OCI-LY7 (cell line): ENCODE measurements at regions of chr4 and their contacts with region 1.

Region 1: DNA sequence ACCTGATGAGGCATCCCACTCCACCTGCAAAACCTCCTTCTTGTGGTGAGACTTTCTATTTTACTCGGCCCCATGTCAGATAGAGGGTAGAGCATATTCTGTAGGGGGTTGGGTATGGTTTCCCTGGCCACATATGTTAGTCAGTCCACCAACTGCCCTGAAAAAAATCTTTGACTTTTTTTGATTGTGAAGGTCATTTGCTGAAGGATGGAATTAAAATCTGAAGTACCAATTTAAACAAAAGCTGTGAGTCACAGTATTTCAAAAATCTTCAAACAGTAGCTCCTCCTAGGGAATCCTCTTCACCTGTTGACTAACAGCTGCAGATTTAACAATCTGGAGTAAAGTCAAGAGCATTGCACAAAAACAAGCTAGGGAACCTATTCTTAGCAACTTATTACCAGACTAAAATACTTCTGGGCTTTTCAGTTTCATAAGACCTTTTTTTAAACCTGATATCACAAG is 8.0 kb upstream of the CCDC110 start:
- DNase-seq: peak; percentile 79
- H3K4me3 ChIP-seq: peak overlapping the region; percentile 69
- H3K27ac ChIP-seq: peak overlapping the region; percentile 95
- H3K4me1 ChIP-seq: peaks cover 58% of the 10 kb centered on the region
- CTCF ChIP-seq: no peak

Region 2: GRCh38 chr4:185286571-185286970 is 193.0 kb before region 1 on chr4:
- CTCF ChIA-PET with region 1: no interaction called
- POLR2A ChIA-PET with region 1: no interaction called
- intact Hi-C with region 1: no loop called
- DNase-seq: no peak
- H3K4me3 ChIP-seq: no peak overlapping the region
- H3K27ac ChIP-seq: no peak overlapping the region
- H3K4me1 ChIP-seq: no peaks in the 10 kb centered on the region
- CTCF ChIP-seq: no peak

Region 3: GRCh38 chr4:185332575-185333464 is 146.7 kb before region 1 on chr4:
- CTCF ChIA-PET with region 1: no interaction called
- POLR2A ChIA-PET with region 1: no interaction called
- intact Hi-C with region 1: no loop called
- DNase-seq: peak; percentile 7
- H3K4me3 ChIP-seq: no peak overlapping the region
- H3K27ac ChIP-seq: no peak overlapping the region
- H3K4me1 ChIP-seq: peaks cover 10% of the 10 kb centered on the region
- CTCF ChIP-seq: no peak

Region 4: DNA sequence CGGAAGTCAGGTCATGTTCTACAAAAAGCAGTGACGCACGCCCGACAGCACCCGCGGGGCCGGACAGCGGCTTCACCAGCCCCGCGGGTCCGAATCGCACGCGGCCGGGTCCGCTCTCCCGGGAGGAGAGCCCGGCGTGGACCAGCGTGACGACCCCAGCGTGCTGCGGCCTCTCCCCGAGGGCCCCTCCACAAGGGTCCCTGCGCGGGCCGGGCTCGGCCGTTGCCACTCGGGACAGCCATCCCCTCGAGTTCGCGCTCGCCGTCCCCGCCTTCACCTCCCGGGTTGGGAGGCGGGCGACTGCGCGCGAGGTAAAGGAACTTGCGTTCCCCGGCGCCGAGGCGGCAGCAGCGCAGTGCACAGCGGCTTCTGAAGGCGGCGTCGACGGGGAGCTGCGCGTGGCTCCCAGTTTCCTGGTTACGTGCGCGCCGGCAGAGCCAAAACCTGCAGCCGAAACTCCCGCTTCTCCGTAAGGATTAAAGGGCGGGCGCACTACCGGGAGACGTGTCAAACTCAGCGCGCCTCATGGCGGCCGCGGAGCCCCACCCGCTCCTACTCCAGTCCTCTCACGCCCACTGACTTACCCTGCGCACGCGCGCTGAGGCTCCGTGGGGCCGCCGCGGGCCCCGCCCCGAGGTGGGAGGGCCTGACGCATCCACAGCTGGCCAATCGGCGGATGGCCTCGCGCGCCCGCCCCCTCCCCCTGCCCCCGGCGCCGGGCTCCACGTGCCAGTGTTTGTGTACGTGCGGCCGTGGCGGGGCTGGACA is 83.4 kb before region 1 on chr4:
- CTCF ChIA-PET with region 1: no interaction called
- POLR2A ChIA-PET with region 1: interaction called, 12 read pairs
- intact Hi-C with region 1: no loop called
- DNase-seq: peak; percentile 97
- H3K4me3 ChIP-seq: peak overlapping the region; percentile 75
- H3K27ac ChIP-seq: peak overlapping the region; percentile 70
- H3K4me1 ChIP-seq: peaks cover 58% of the 10 kb centered on the region
- CTCF ChIP-seq: no peak

Region 5: DNA sequence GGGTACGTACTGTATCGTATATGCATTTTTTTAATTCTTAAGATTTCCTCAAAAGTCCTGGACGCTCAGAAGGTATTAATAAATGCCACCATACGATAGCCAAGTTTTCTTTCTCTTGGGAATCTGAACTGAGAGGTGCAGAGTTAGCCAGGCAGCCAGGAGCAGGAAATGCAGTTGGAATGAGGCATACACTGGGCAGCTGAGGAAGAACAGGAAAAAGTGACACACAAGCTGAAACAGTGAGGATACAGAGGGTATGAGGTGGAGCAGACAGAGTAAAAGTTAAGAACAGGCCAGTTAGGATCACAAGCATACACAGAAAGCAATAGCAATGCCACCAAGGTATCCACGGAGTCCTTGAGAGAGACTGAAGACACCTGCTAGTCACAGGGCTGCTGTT is 67.1 kb before region 1 on chr4:
- CTCF ChIA-PET with region 1: no interaction called
- POLR2A ChIA-PET with region 1: interaction called, 26 read pairs
- intact Hi-C with region 1: loop called (anchors 1 kb)
- DNase-seq: no peak
- H3K4me3 ChIP-seq: no peak overlapping the region
- H3K27ac ChIP-seq: peak overlapping the region; percentile 46
- H3K4me1 ChIP-seq: peaks cover 25% of the 10 kb centered on the region
- CTCF ChIP-seq: no peak

Region 6: GRCh38 chr4:185504098-185505047 is 24.8 kb after region 1 on chr4:
- CTCF ChIA-PET with region 1: no interaction called
- POLR2A ChIA-PET with region 1: interaction called, 10 read pairs
- intact Hi-C with region 1: no loop called
- DNase-seq: no peak
- H3K4me3 ChIP-seq: no peak overlapping the region
- H3K27ac ChIP-seq: no peak overlapping the region
- H3K4me1 ChIP-seq: no peaks in the 10 kb centered on the region
- CTCF ChIP-seq: no peak

Region 7: DNA sequence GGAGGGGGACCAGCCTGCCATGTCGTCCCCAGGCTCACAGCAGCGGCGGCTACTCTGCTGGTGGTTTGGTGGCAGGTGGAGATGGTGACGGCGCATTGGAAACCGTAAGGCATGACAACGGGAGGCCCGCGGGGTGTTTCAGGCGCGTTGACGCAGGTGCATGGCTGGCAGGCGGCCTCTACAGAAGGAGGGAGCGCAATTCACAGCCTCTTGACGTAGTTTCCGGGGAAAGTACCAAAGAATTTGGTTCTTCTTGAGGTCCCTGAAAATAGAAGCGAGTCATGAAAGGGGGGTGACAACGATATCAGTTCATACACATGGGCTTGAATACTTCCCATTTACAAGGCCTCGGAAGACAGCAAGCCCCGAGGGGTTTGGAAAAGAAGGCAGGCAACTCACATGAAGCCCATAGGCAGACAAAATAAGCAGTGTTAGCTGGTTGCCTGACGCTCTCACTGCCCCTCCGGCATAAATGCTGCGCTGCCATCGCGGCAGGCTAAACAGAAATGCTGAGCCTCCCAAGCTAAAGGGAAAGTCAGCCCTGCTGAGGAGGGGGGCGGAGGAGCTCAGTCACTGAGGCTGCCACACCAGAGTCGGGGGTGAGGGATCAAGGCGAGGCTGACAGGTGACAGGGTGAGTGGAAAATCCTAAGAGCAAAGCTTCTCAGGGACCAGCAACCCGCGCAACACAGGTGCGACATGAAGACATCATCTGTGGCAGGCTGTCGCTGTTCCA is 108.1 kb after region 1 on chr4:
- CTCF ChIA-PET with region 1: interaction called, 19 read pairs
- POLR2A ChIA-PET with region 1: interaction called, 142 read pairs
- intact Hi-C with region 1: loop called (anchors 1 kb)
- DNase-seq: peak; percentile 90
- H3K4me3 ChIP-seq: peak overlapping the region; percentile 57
- H3K27ac ChIP-seq: peak overlapping the region; percentile 78
- H3K4me1 ChIP-seq: peaks cover 37% of the 10 kb centered on the region
- CTCF ChIP-seq: no peak

Region 8: GRCh38 chr4:185625503-185625902 is 146.0 kb after region 1 on chr4:
- CTCF ChIA-PET with region 1: no interaction called
- POLR2A ChIA-PET with region 1: no interaction called
- intact Hi-C with region 1: no loop called
- DNase-seq: no peak
- H3K4me3 ChIP-seq: no peak overlapping the region
- H3K27ac ChIP-seq: no peak overlapping the region
- H3K4me1 ChIP-seq: no peaks in the 10 kb centered on the region
- CTCF ChIP-seq: no peak

Region 9: GRCh38 chr4:185637193-185637903 is 157.8 kb after region 1 on chr4:
- CTCF ChIA-PET with region 1: no interaction called
- POLR2A ChIA-PET with region 1: no interaction called
- intact Hi-C with region 1: no loop called
- DNase-seq: no peak
- H3K4me3 ChIP-seq: no peak overlapping the region
- H3K27ac ChIP-seq: no peak overlapping the region
- H3K4me1 ChIP-seq: no peaks in the 10 kb centered on the region
- CTCF ChIP-seq: no peak